Activated T-helper 2 cell treated with anti-CD3 and anti-CD28 coated beads, Interferon-gamma antibody, Interleukin-2, Interleukin-4, amounts not matched to agents 10 μg/mL and 5 μg/mL and 100 μg/mL, durations not matched to agents 14 hours and 24 hours and 36 hours (primary cell): ENCODE measurements at regions of chr10 and their contacts with region 1.

Region 1: GRCh38 chr10:119737827-119738226 is 12.0 kb downstream of the INPP5F start:
- DNase-seq: no peak
- H3K4me3 Mint-ChIP-seq: no peak overlapping the region
- H3K27ac Mint-ChIP-seq: no peak overlapping the region
- H3K4me1 Mint-ChIP-seq: peaks cover 23% of the 10 kb centered on the region
- H3K27me3 Mint-ChIP-seq: no peaks in the 10 kb centered on the region

Region 2: GRCh38 chr10:119049361-119049760 is 688.5 kb before region 1 on chr10:
- intact Hi-C with region 1: no loop called
- DNase-seq: no peak
- H3K4me3 Mint-ChIP-seq: no peak overlapping the region
- H3K27ac Mint-ChIP-seq: no peak overlapping the region
- H3K4me1 Mint-ChIP-seq: peaks cover 26% of the 10 kb centered on the region
- H3K27me3 Mint-ChIP-seq: no peaks in the 10 kb centered on the region

Region 3: DNA sequence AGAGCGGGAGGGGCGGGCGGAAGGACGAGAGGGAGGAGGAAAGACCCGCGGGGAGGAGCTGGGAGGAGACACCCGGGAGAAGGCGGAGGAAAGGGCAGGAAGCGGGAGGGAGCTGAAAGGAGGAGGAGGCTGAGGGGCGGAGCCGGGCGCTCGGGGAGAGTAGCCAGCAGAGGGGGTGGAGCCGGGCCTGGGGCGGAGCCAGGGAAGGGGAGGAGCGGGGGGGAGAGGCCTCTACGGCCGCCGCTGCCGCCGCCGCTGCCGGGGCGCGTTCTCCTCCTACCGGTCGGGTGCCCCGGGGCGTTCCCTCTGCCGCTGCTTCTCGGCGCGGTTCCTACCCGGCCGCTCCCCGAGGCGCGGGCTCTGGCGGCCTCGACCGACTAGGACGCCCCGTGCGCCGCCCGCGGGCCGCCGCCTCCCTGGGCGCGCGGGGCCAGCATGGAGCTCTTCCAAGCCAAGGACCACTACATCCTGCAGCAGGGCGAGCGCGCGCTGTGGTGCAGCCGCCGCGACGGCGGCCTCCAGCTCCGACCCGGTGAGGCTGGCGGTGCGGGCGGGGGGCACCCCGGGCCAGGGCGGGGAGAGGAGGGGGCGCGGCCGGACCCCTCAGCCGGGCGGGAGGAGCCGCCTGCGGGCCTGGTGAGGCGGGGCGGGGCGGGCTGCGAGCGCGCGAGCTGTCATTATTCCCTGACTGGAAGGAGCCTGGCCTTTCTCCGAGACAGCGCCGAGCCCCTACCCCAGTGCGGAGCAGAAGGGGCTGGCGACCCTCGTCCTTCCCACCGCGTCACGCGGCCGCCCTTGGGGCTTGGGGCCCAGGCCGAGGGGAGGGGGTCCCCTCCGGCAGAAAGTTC is 11.8 kb before region 1 on chr10 and contains the start of gene INPP5F:
- intact Hi-C with region 1: no loop called
- DNase-seq: peak; percentile 98
- H3K4me3 Mint-ChIP-seq: peak within 1 kb of the TSS; percentile 83
- H3K27ac Mint-ChIP-seq: peak within 1 kb of the TSS; percentile 80
- H3K4me1 Mint-ChIP-seq: peaks cover 33% of the 10 kb centered on the region
- H3K27me3 Mint-ChIP-seq: peaks cover 4% of the 10 kb centered on the region
- total RNA-seq, gene INPP5F: 10.2 and 11.9 TPM in 2 replicates

Region 4: DNA sequence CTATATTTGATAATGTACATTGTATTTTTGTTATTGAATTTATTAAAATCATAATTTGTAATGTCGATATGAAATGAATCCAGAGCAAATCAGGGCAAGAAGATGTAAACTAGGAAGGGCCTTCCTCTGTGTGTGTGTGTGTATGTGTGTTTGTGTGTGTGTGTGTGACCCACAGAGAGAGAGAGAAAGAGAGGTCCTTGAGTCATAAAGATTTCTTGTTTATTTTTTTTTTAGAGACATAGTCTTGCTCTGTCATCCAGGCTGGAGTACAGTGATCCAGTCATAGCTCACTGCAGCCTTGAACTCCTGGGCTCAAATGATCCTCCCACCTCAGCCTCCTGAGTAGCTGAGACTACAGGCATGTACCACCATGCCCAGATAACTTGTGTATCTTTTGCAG is 38.7 kb after region 1 on chr10:
- intact Hi-C with region 1: loop called (anchors 5 kb)
- DNase-seq: no peak
- H3K4me3 Mint-ChIP-seq: no peak overlapping the region
- H3K27ac Mint-ChIP-seq: no peak overlapping the region
- H3K4me1 Mint-ChIP-seq: peaks cover 9% of the 10 kb centered on the region
- H3K27me3 Mint-ChIP-seq: no peaks in the 10 kb centered on the region

Region 5: DNA sequence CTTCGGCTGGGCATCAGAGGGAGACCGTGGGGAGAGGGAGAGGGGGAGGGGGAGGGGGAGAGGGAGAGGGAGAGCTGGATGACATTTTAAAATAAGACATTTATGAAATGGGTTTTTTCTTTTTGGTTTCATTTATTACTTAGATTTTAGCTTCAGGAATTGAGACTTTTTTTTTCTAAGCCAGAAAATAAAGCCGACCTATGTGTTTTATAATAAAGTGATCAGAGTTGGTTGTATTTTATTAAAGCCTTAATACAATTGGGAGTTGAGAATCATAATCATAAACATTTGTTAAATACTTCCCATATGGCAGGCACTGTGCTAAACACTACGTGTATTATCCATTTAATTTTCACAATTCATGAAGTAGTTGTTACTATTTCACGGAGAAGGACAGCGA is 58.2 kb after region 1 on chr10:
- intact Hi-C with region 1: no loop called
- DNase-seq: no peak
- H3K4me3 Mint-ChIP-seq: no peak overlapping the region
- H3K27ac Mint-ChIP-seq: no peak overlapping the region
- H3K4me1 Mint-ChIP-seq: peaks cover 1% of the 10 kb centered on the region
- H3K27me3 Mint-ChIP-seq: no peaks in the 10 kb centered on the region